Activated T-helper 2 cell treated with anti-CD3 and anti-CD28 coated beads, Interferon-gamma antibody, Interleukin-2, Interleukin-4, amounts not matched to agents 10 μg/mL and 5 μg/mL and 100 μg/mL, durations not matched to agents 14 hours and 24 hours and 36 hours (primary cell): ENCODE measurements at regions of chr11 and their contacts with region 1.

Region 1: DNA sequence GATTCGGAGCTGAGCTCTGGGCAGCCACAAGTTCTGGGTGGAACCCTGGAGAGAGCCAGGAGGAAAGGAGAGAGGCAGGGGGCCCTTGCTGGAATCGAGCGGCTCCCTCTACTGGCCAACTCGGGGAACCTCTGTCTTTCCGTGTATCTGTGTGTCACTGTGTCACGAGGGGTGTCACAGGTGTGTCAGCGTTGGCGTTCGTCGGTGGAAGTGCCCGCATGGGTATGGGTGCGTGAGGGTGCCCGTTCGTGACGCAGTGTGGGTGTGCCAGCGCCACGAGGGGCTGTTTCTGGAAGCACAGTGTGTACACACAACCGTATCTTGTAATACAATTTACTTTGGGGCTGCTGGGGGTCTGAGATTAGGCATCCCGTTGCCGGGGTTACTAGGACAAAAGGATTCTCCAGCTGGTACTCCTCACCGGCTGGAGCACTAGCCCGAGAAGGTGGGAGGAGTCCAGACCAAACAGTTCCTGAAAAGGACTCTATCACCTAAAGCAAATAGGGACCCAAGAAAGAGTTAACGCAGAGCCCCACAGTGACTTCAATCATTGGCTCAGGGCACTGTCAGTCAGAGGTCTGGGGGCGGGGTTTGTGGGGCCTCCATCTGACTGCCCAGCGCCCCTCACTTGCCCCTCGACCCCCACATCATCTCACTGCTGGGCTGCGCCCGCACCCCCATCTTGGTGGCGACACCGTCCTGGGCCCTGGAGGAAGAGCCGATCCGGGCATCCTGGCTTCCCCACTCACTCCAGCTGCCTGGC is 2.6 kb upstream of the BCL9L start:
- DNase-seq: peak; percentile 86
- H3K4me3 Mint-ChIP-seq: peak overlapping the region; percentile 84
- H3K27ac Mint-ChIP-seq: peak overlapping the region; percentile 91
- H3K4me1 Mint-ChIP-seq: peaks cover 46% of the 10 kb centered on the region
- H3K27me3 Mint-ChIP-seq: no peaks in the 10 kb centered on the region

Region 2: GRCh38 chr11:118689851-118690552 is 238.3 kb before region 1 on chr11:
- intact Hi-C with region 1: loop called (anchors 1 kb)
- DNase-seq: peak; percentile 75
- H3K4me3 Mint-ChIP-seq: peak overlapping the region; percentile 68
- H3K27ac Mint-ChIP-seq: no peak overlapping the region
- H3K4me1 Mint-ChIP-seq: peaks cover 26% of the 10 kb centered on the region
- H3K27me3 Mint-ChIP-seq: peaks cover 11% of the 10 kb centered on the region

Region 3: DNA sequence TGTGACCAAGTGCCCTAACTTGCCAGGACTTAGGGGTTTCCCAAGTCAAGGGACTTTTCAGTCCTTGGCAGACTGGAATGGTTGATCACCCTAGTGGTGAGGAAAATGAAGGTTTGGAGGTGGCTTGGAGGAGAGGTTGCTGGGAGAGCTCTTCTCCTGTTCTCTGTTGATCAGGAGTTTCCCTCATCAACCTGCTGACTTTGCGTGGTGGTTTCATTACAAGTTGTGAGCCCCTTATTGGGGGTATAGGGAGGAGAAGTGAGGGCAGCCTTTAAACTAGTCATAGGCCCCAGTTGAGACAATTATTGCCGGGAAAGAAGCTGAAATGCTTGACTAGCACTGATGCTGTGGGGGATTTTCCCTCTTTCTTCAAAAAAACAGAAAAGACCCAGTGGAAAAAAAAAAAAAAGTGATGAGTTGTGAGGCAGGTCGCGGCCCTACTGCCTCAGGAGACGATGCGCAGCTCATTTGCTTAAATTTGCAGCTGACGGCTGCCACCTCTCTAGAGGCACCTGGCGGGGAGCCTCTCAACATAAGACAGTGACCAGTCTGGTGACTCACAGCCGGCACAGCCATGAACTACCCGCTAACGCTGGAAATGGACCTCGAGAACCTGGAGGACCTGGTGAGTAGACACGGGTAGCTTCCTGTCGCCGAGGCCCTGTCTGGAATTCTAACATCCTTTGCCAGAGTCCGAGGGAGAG is 44.8 kb before region 1 on chr11 and contains the start of gene CXCR5:
- intact Hi-C with region 1: loop called (anchors 2 kb)
- DNase-seq: no peak
- H3K4me3 Mint-ChIP-seq: peak within 1 kb of the TSS; percentile 79
- H3K27ac Mint-ChIP-seq: peak within 1 kb of the TSS; percentile 86
- H3K4me1 Mint-ChIP-seq: peaks cover 62% of the 10 kb centered on the region
- H3K27me3 Mint-ChIP-seq: no peaks in the 10 kb centered on the region
- total RNA-seq, gene CXCR5: 7.5 and 8.1 TPM in 2 replicates

Region 4: DNA sequence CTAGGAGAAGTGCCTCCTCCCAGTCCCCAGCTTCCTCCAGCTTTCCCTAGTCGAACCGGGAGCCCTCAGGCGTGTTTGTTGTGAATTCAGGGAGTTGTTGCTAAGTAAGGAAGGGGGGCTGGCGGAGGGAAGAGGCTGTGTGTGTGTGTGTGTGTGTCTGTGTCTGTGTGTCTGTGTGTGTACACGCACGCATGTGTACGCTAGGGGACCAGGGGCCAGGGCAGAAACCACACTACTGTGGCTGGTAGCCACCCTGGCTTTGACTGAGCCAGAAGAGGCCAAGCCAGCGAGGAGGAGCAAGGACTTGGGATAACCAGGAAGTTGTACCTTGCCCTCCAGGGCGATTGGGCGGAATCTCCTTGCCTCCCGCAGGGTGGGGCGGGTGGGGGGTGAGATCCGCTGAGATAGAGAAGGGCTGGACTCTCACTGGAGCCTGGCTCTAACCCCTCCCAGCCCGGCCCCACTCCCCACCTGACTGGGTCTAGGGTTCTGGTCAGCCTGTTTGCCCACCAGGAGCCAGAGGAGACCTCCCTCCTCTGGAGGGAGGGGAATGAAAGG is 10.1 kb before region 1 on chr11:
- intact Hi-C with region 1: loop called (anchors 1 kb)
- DNase-seq: no peak
- H3K4me3 Mint-ChIP-seq: peak overlapping the region; percentile 66
- H3K27ac Mint-ChIP-seq: peak overlapping the region; percentile 93
- H3K4me1 Mint-ChIP-seq: peaks cover 77% of the 10 kb centered on the region
- H3K27me3 Mint-ChIP-seq: no peaks in the 10 kb centered on the region

Region 5: DNA sequence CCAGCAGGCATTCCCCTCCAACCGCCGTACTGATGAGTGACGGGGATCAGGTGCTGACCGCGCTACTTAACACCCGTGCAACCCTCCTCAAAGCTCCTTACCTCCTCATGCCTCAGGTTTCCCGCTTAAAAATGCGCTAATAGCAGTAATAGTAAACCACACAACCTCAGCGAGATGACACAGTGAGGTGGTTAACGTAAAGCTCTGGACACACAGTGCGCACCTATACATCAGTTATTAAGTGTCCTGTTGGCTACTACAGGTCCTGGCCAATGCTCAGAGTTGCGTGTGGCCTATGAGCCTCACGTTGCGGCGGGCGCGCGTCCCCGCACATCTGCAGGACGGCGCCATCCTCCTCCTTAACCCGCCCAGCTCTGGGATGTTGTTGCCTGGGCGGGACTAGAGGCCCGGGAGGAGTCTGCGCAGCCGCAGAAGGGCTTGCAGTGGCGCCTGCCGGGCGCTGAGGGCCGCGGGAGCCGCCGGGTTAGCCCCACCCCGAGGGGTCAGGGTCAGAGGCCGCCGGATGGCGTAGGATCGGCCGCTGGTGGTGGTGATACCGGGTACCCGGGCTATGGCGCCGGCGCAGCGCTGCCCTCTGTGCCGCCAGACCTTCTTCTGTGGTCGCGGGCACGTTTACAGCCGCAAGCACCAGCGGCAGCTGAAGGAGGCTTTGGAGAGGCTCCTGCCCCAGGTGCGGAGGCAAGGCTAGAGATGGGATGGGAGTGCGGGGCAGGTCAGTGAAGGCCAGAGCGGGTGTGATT is 69.5 kb after region 1 on chr11 and contains the start of gene CENATAC:
- intact Hi-C with region 1: loop called (anchors 1 kb)
- DNase-seq: peak; percentile 95
- H3K4me3 Mint-ChIP-seq: peak within 1 kb of the TSS; percentile 99
- H3K27ac Mint-ChIP-seq: peak within 1 kb of the TSS; percentile 98
- H3K4me1 Mint-ChIP-seq: peaks cover 21% of the 10 kb centered on the region
- H3K27me3 Mint-ChIP-seq: no peaks in the 10 kb centered on the region
- total RNA-seq, gene CENATAC: 44.2 and 47.7 TPM in 2 replicates

Region 6: GRCh38 chr11:119101759-119102423 is 173.6 kb after region 1 on chr11 and contains the start of gene DPAGT1:
- intact Hi-C with region 1: loop called (anchors 5 kb)
- DNase-seq: peak; percentile 84
- H3K4me3 Mint-ChIP-seq: peak within 1 kb of the TSS; percentile 91
- H3K27ac Mint-ChIP-seq: peak within 1 kb of the TSS; percentile 98
- H3K4me1 Mint-ChIP-seq: peaks cover 32% of the 10 kb centered on the region
- H3K27me3 Mint-ChIP-seq: no peaks in the 10 kb centered on the region
- total RNA-seq, gene DPAGT1: 82.2 and 83.4 TPM in 2 replicates